CD4-positive, alpha-beta T cell (primary cell): ENCODE measurements at regions of chr17 and their contacts with region 1.

Region 1: DNA sequence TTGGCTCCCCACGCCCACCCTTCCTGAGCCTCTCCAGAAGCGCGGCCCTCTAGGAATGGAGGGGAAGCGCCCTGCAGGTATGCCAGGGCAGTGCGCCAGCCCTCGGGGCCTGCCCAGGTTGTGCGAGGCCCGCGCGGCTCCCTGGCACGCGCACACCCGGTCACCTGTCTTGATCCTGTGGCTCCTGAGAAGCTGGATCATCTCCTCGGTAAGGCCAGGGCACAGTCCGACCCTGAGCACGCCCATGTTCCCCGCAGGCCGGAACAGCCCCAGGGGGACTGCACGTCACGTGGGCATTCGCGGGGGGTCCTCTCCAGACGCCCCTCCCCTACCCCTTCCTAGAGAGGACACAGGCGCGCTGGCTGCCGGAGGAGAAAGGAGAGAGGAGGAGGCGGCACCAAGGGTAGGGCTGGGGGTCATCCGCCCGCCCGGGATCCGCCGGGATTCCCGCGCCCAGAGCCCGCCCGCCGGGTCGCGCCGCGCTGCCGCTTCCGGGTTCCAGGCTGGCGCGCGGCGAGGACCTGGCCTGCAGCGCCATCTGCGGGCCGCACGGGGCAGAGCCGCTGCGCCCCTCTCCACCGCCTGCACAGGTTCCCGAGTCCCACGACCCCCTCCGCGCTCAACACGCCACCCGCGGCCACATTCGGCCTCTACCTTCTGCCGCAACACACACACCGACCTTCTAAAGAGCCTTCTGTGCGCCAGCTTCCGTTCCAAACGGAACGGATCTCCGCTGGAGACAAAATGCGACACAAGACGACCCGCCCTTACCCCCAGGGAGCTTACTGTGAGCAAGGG is at the start of gene RAD51D:
- DNase-seq: peak; percentile 60 to 93 (median 74)
- ATAC-seq: peak; percentile 87
- H3K4me3 ChIP-seq: peak within 1 kb of the TSS; percentile 98
- H3K4me3 Mint-ChIP-seq: peak within 1 kb of the TSS; percentile 97
- H3K27ac ChIP-seq: peak within 1 kb of the TSS; percentile 56 to 60
- H3K27ac Mint-ChIP-seq: peak within 1 kb of the TSS; percentile 88
- H3K4me1 ChIP-seq: peaks cover 34% of the 10 kb centered on the region
- H3K4me1 Mint-ChIP-seq: peaks cover 34% of the 10 kb centered on the region
- H3K27me3 ChIP-seq: no peaks in the 10 kb centered on the region
- H3K27me3 Mint-ChIP-seq: no peaks in the 10 kb centered on the region
- CTCF ChIP-seq: peak; percentile 67
- total RNA-seq, gene RAD51D: 6.2 to 8.6 TPM

Region 2: GRCh38 chr17:34420254-34420766 is 699.3 kb before region 1 on chr17:
- CTCF ChIA-PET with region 1: interaction called, 14 read pairs
- POLR2A ChIA-PET with region 1: interaction called, 7 read pairs
- intact Hi-C with region 1: loop called (anchors 1 kb)
- DNase-seq: peak; percentile 46 to 77 (median 52)
- ATAC-seq: peak; percentile 51
- H3K4me3 ChIP-seq: no peak overlapping the region
- H3K4me3 Mint-ChIP-seq: no peak overlapping the region
- H3K27ac ChIP-seq: no peak overlapping the region
- H3K27ac Mint-ChIP-seq: no peak overlapping the region
- H3K4me1 ChIP-seq: peaks cover 7% of the 10 kb centered on the region
- H3K4me1 Mint-ChIP-seq: no peaks in the 10 kb centered on the region
- H3K27me3 ChIP-seq: peaks cover 18 to 27% of the 10 kb centered on the region in 2 experiments
- H3K27me3 Mint-ChIP-seq: peaks cover 46% of the 10 kb centered on the region
- CTCF ChIP-seq: peak; percentile 98

Region 3: DNA sequence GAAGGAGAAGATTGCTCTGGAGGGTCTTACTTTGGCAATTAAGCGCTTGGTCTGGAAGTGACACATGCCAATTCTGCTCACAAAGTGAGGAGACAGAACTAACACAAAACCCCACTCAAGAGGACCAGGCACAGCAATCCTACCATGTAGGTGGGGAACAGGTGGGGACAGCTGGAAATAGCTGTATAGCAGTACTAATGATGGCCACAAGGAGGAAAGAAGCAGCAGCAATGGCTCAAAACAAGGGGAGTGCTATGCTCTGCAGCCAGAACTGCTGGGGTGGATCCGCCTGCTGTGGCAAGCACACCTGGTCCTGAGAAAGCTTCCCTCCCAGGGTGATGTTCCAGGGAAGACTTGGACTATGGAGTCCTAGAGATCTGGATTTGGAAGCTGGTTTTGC is 557.2 kb before region 1 on chr17:
- CTCF ChIA-PET with region 1: no interaction called
- POLR2A ChIA-PET with region 1: no interaction called
- intact Hi-C with region 1: loop called in 1 of 2 experiments (anchors 5 kb)
- DNase-seq: peak in 3 of 14 experiments; percentile 16 to 39 (median 37)
- ATAC-seq: peak; percentile 56
- H3K4me3 ChIP-seq: no peak overlapping the region
- H3K4me3 Mint-ChIP-seq: no peak overlapping the region
- H3K27ac ChIP-seq: no peak overlapping the region
- H3K27ac Mint-ChIP-seq: no peak overlapping the region
- H3K4me1 ChIP-seq: no peaks in the 10 kb centered on the region
- H3K4me1 Mint-ChIP-seq: no peaks in the 10 kb centered on the region
- H3K27me3 ChIP-seq: peaks cover 13 to 18% of the 10 kb centered on the region in 2 experiments
- H3K27me3 Mint-ChIP-seq: peaks cover 28% of the 10 kb centered on the region
- CTCF ChIP-seq: peak; percentile 25

Region 4: DNA sequence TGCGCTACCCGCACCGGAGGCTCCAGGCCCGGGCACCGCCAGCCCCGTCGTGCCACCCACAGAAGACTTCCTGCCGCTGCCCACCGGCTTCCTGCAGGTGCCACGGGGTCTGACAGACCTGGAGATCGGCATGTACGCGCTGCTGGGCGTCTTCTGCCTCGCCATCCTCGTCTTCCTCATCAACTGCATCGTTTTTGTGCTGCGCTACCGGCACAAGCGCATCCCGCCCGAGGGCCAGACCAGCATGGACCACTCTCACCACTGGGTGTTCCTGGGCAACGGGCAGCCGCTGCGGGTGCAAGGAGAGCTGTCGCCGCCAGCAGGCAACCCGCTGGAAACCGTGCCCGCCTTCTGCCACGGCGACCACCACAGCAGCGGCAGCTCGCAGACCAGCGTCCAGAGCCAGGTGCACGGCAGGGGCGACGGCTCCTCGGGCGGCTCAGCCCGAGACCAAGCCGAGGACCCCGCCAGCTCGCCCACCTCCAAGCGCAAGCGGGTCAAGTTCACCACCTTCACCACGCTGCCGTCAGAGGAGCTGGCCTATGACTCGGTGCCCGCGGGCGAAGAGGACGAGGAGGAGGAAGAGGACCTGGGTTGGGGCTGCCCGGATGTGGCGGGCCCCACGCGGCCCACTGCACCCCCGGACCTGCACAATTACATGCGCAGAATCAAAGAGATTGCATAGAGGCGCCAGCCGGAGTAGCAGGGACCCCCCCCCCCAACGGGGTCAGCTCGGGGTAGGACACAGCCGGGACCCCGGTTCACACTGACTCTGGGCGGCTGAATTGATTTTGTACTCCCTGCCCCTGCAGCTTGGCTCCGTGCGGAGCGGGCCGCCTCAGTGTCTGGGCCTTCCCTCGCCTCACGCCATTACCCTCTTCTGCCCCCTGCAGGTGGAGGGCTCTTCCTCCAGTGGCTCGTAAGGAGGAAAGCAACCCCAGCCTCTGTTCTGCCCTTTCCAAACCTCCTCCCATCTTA is 481.7 kb before region 1 on chr17:
- CTCF ChIA-PET with region 1: no interaction called
- POLR2A ChIA-PET with region 1: no interaction called
- intact Hi-C with region 1: loop called in 1 of 2 experiments (anchors 5 kb)
- DNase-seq: peak; percentile 70 to 90 (median 78)
- ATAC-seq: peak; percentile 97
- H3K4me3 ChIP-seq: peak overlapping the region; percentile 66
- H3K4me3 Mint-ChIP-seq: peak overlapping the region; percentile 87
- H3K27ac ChIP-seq: no peak overlapping the region
- H3K27ac Mint-ChIP-seq: peak overlapping the region; percentile 14
- H3K4me1 ChIP-seq: peaks cover 18% of the 10 kb centered on the region
- H3K4me1 Mint-ChIP-seq: peaks cover 6% of the 10 kb centered on the region
- H3K27me3 ChIP-seq: no peaks in the 10 kb centered on the region
- H3K27me3 Mint-ChIP-seq: peaks cover 12% of the 10 kb centered on the region
- CTCF ChIP-seq: peak; percentile 77

Region 5: DNA sequence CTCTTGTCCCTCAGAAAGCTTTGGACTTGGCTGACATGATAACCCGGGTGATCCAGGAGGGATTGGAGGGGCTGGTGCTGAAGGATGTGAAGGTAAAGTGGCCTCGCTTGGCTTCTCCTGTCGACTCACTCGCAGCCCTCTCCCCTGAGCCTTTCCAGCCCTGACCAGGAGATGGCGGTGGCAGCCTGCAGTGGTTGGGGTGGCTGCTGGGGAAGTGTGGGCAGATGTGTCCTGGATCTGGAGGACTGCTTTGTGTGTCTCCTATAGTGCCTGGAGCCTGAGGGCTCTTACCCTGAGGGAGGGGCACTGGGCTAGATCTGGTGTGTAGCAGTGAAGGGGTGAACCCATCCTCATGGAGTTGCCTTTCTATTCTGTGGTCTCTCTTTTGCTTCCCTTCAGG is 121.4 kb before region 1 on chr17:
- CTCF ChIA-PET with region 1: interaction called, 5 read pairs
- POLR2A ChIA-PET with region 1: interaction called, 4 read pairs
- intact Hi-C with region 1: loop called (anchors 1 kb)
- DNase-seq: peak; percentile 69 to 88 (median 76)
- ATAC-seq: peak; percentile 98
- H3K4me3 ChIP-seq: no peak overlapping the region
- H3K4me3 Mint-ChIP-seq: no peak overlapping the region
- H3K27ac ChIP-seq: no peak overlapping the region
- H3K27ac Mint-ChIP-seq: peak overlapping the region; percentile 72
- H3K4me1 ChIP-seq: peaks cover 8% of the 10 kb centered on the region
- H3K4me1 Mint-ChIP-seq: peaks cover 6% of the 10 kb centered on the region
- H3K27me3 ChIP-seq: no peaks in the 10 kb centered on the region
- H3K27me3 Mint-ChIP-seq: no peaks in the 10 kb centered on the region
- CTCF ChIP-seq: peak; percentile 83

Region 6: DNA sequence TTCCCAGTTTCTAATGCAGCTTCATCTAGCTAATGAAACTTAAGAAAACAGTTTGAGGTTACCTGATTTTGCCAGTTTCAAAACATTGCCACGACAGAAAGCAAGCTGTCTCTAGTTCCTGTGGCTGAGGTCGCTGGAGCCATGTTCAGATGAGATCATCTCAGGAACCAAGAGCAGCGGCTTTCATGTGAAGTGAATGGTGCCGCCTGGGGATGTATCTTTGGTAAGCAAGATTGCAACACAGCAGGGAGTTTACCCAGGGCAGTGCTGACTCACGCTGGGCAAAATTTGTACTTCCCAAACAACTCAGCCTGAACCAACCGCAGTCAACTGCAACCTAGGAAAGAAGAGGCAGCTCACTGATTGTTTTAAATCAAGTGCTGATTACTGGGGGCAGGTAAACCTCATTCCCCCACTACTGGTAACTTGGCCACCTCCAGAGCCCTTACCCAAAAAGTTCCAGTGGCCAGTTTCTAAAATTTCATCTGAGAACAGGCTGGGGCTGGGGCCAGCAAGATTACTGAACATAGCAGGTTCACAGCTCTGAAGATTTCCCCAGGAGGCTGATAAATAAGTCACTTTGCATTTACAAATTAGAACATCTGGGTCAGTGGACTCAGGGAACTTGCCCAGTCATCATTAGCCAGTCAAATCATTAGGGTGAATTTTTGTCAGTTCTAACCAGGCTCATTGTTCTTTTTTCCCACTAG is 55.9 kb before region 1 on chr17 and contains the start of gene RFFL:
- CTCF ChIA-PET with region 1: interaction called, 12 read pairs
- POLR2A ChIA-PET with region 1: interaction called, 3 read pairs
- intact Hi-C with region 1: no loop called
- DNase-seq: peak; percentile 63 to 97 (median 80)
- ATAC-seq: peak; percentile 97
- H3K4me3 ChIP-seq: peak within 1 kb of the TSS; percentile 43
- H3K4me3 Mint-ChIP-seq: peak within 1 kb of the TSS; percentile 82
- H3K27ac ChIP-seq: peak within 1 kb of the TSS; percentile 62 to 63
- H3K27ac Mint-ChIP-seq: peak within 1 kb of the TSS; percentile 88
- H3K4me1 ChIP-seq: peaks cover 40% of the 10 kb centered on the region
- H3K4me1 Mint-ChIP-seq: peaks cover 75% of the 10 kb centered on the region
- H3K27me3 ChIP-seq: no peaks in the 10 kb centered on the region
- H3K27me3 Mint-ChIP-seq: no peaks in the 10 kb centered on the region
- CTCF ChIP-seq: peak; percentile 63
- total RNA-seq, gene RFFL: 57.8 to 66.1 TPM